ENCODE measurements at regions of chr6 and their contacts with region 1.

Region 1: GRCh38 chr6:105793130-105793529 is 293.0 kb upstream of the PRDM1 start:
- DNase-seq: peak; percentile 62
- H3K4me3 Mint-ChIP-seq: no peak overlapping the region
- H3K27ac Mint-ChIP-seq: no peak overlapping the region
- H3K4me1 Mint-ChIP-seq: peaks cover 17% of the 10 kb centered on the region
- H3K27me3 Mint-ChIP-seq: no peaks in the 10 kb centered on the region
- CTCF ChIP-seq: peak; percentile 13

Region 2: DNA sequence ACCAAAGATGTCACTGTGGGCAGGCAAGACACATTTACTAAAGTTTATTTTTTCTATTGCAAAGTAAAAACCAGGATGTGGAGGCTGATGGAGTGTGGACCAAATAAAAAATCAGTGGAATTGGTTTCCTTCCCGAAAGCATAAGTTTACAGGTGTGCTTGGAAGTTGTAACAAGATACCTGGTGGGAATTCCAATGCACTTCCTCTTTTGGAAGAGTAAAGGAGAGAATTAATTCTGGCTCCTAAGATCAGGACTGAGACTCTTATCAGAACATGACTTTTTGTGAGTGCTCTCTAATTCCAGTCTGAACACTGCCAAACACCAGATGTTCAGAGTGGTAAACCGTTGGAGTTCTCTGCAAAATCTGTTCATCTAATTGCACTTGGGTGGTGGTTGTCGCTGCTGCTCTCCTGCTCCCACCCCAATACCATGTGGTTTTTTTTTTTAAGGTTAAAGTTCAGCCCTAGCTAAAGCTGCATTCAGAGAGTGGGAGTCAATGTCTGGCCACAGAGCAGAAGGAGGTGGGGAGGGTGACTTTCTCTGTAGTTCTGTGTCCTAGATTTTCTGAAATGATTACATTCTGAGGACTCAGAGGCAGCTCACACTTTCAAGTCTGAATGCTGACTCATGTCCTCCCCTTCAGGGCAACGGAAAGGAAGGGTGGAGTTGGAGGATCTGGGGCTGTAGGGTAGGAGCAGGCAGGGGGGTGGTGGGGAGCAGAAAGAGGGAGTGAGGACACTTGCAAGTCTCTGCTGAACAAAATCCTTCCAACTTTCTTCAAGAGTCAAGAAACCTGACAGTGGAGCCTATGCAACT is 17.2 kb after region 1 on chr6:
- CTCF ChIA-PET with region 1: interaction called, 3 read pairs
- POLR2A ChIA-PET with region 1: interaction called, 16 read pairs
- intact Hi-C with region 1: no loop called
- DNase-seq: peak; percentile 91
- H3K4me3 Mint-ChIP-seq: peak overlapping the region; percentile 7
- H3K27ac Mint-ChIP-seq: peak overlapping the region; percentile 86
- H3K4me1 Mint-ChIP-seq: peaks cover 30% of the 10 kb centered on the region
- H3K27me3 Mint-ChIP-seq: no peaks in the 10 kb centered on the region
- CTCF ChIP-seq: no peak

Region 3: DNA sequence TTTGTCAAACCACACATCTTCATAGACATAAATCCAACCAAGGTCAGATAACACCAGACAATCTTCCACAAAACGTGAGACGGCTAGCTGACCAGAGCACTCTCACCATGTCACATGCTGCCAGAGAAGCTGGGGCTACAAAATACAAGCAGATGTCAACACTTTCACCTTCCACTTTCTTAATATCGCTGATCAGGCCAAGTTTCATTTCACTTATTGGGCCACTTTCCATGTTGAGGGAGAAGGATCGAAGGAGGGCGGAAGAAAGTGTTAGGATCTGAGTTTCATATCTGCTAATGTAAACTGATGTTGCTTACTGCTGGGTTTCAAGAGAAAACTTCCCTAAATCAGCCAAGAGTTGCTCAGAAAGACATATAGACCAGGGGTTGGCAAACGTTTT is 116.0 kb after region 1 on chr6:
- CTCF ChIA-PET with region 1: no interaction called
- POLR2A ChIA-PET with region 1: no interaction called
- intact Hi-C with region 1: no loop called
- DNase-seq: no peak
- H3K4me3 Mint-ChIP-seq: no peak overlapping the region
- H3K27ac Mint-ChIP-seq: no peak overlapping the region
- H3K4me1 Mint-ChIP-seq: no peaks in the 10 kb centered on the region
- H3K27me3 Mint-ChIP-seq: no peaks in the 10 kb centered on the region
- CTCF ChIP-seq: no peak

Measured in MCF 10A (cell line).